Calu3 (cell line): ENCODE measurements at regions of chr13 and their contacts with region 1.

Region 1: GRCh38 chr13:90084684-90085290 is 1262.7 kb upstream of the MIR17HG start:
- DNase-seq: no peak
- H3K4me3 Mint-ChIP-seq: no peak overlapping the region
- H3K27ac Mint-ChIP-seq: no peak overlapping the region
- H3K4me1 Mint-ChIP-seq: no peaks in the 10 kb centered on the region
- H3K27me3 Mint-ChIP-seq: no peaks in the 10 kb centered on the region
- CTCF ChIP-seq: no peak

Region 2: DNA sequence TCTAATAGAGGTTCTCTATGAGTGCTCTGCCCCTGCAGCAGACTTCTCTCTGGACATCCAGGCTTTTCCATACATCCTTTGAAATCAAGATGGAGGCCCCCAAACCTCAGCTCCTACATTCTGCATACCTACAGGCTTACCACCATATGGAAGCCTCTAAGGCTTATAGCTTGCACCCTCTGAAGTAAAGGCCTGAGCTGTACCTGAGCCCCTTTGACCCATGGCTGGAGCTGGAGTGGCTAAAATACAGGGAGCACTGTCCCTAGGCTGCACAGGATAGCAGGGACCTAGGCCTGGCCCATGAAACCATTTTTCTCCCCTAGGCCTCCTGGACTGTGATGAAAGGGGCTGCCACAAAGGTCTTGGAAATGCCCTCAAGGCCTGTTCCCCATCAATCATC is 176.6 kb after region 1 on chr13:
- CTCF ChIA-PET with region 1: interaction called, 11 read pairs
- intact Hi-C with region 1: no loop called
- DNase-seq: no peak
- H3K4me3 Mint-ChIP-seq: no peak overlapping the region
- H3K27ac Mint-ChIP-seq: no peak overlapping the region
- H3K4me1 Mint-ChIP-seq: no peaks in the 10 kb centered on the region
- H3K27me3 Mint-ChIP-seq: no peaks in the 10 kb centered on the region
- CTCF ChIP-seq: no peak